ENCODE measurements at regions of chr11 and their contacts with region 1.

Region 1: DNA sequence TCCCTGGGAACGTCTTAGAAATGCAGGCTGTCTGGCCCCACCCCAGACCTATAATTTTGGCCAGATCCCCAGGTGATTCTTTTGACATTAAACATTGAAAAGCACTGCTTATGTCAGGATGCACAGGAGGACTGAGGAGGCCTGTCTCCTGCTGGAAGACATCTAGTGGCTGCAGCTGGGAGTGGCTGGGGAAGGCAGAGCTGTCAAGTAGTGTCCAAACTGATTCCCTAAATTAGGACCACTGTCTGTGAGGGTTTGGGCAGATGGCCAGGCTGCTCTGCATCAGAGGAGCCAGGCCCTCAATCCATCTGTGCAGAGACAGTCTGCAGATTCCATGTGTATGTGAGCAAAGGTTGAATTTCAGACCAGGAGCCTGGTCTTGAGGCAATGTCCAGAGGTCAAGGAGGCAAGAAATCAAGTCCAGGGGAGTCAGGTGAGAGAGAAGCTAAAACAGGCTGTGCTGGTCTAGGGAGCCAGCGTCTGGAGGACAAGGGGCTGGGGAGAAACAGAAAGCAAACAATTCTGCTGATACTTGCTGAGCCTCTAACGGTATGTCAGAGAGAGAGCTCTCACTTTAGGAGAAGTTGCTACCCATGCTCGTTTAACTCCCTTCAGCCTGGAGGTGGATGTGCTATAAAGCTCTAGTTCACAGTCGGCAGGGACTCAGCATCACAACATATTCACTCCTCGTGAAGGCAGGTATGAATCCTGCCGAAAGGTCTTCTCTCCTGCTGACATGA is 15.3 kb upstream of the SYTL2 start:
- DNase-seq: peak; percentile 26
- H3K4me3 Mint-ChIP-seq: no peak overlapping the region
- H3K27ac Mint-ChIP-seq: peak overlapping the region; percentile 81
- H3K4me1 Mint-ChIP-seq: peaks cover 74% of the 10 kb centered on the region
- H3K27me3 Mint-ChIP-seq: no peaks in the 10 kb centered on the region

Region 2: GRCh38 chr11:85810871-85811611 is 15.2 kb before region 1 on chr11 and contains the start of gene SYTL2:
- CTCF ChIA-PET with region 1: interaction called, 10 read pairs
- POLR2A ChIA-PET with region 1: no interaction called
- DNase-seq: peak; percentile 74
- H3K4me3 Mint-ChIP-seq: peak within 1 kb of the TSS; percentile 88
- H3K27ac Mint-ChIP-seq: peak within 1 kb of the TSS; percentile 84
- H3K4me1 Mint-ChIP-seq: peaks cover 41% of the 10 kb centered on the region
- H3K27me3 Mint-ChIP-seq: peaks cover 13% of the 10 kb centered on the region
- total RNA-seq, gene SYTL2: 43.5 to 45.6 TPM

Region 3: DNA sequence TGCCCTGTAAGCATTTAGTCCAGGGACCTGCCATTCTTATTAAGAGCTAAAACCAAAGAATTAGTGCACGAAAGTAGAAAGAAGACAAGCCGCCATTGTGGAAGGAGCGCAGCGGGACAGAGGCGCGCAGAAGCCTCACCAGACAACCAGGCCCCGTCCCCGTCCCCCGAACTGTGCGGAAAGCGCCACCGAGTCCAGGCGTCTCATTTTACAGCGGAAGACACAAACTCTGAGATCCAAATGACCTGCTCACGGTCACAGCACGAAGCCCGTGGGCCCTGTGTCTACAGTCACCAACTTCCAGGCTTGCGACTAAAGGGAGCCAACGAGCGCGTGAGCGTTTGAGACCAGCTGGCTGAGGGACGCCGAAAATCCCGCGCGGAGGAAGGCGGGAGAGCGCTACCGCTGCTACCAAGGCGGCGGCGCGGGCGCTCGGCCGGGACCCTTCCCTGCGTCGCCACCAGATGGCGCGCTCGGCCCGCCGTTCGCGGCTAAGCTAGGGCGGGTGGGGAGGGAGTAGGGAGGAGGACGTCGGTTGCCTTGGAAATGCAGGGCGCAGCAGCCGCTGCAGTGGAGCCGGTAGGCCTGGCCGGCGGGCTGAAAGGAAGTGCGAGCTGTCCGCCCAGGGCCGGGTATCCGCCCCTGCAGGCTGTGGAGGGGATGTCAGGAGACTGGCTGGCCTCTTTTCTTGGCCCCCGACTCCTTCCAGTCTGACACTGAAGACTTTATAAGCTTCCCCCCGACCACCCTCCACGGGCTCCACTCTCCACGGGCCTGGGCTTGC is 28.5 kb after region 1 on chr11:
- CTCF ChIA-PET with region 1: interaction called, 10 read pairs
- POLR2A ChIA-PET with region 1: no interaction called
- DNase-seq: peak; percentile 88
- H3K4me3 Mint-ChIP-seq: peak overlapping the region; percentile 86
- H3K27ac Mint-ChIP-seq: peak overlapping the region; percentile 93
- H3K4me1 Mint-ChIP-seq: peaks cover 18% of the 10 kb centered on the region
- H3K27me3 Mint-ChIP-seq: peaks cover 3% of the 10 kb centered on the region

Measured in activated CD4-positive, alpha-beta T cell treated with anti-CD3 and anti-CD28 coated beads, Interleukin-2, amount 10 ng/mL, durations not matched to agents 7 days and 5 days (primary cell).